HEK293 (cell line): ENCODE measurements at regions of chr17 and their contacts with region 1.

Region 1: GRCh38 chr17:34542700-34543336 is 36.6 kb upstream of the TMEM132E start:
- H3K4me3 ChIP-seq: no peak overlapping the region
- H3K27ac ChIP-seq: no peak overlapping the region
- H3K4me1 ChIP-seq: no peaks in the 10 kb centered on the region
- CTCF ChIP-seq: peak; percentile 40; the same call in 1 of the 2 replicates

Region 2: DNA sequence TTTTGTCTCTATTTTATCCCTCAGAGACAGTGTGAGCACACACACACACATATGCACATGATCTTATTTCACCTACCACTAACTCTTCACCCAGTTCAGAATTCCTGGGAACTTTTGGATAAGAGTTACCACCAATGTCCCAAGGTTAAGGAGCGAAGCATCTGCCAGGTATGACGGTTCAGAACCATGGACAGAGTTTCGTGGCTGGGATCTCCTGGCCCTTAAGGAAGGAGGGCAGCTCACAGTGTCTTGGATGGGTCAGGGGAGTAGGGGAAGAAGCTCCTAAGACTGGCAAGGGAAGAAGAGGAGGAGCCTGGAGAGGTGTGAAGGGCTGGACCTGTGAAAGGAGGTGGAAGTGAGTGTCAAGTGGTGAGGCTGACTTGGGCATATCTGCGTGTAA is 13.6 kb after region 1 on chr17:
- CTCF ChIA-PET with region 1: interaction called, 13 read pairs
- POLR2A ChIA-PET with region 1: no interaction called
- H3K4me3 ChIP-seq: no peak overlapping the region
- H3K27ac ChIP-seq: no peak overlapping the region
- H3K4me1 ChIP-seq: no peaks in the 10 kb centered on the region
- CTCF ChIP-seq: no peak

Region 3: GRCh38 chr17:34584805-34585416 is 42.1 kb after region 1 on chr17:
- CTCF ChIA-PET with region 1: interaction called, 10 read pairs
- POLR2A ChIA-PET with region 1: no interaction called
- H3K4me3 ChIP-seq: no peak overlapping the region
- H3K27ac ChIP-seq: no peak overlapping the region
- H3K4me1 ChIP-seq: peaks cover 7% of the 10 kb centered on the region
- CTCF ChIP-seq: no peak

Region 4: GRCh38 chr17:34647511-34647910 is 104.7 kb after region 1 on chr17:
- CTCF ChIA-PET with region 1: interaction called, 10 read pairs
- POLR2A ChIA-PET with region 1: no interaction called
- H3K4me3 ChIP-seq: no peak overlapping the region
- H3K27ac ChIP-seq: no peak overlapping the region
- H3K4me1 ChIP-seq: peaks cover 22% of the 10 kb centered on the region
- CTCF ChIP-seq: no peak

Region 5: DNA sequence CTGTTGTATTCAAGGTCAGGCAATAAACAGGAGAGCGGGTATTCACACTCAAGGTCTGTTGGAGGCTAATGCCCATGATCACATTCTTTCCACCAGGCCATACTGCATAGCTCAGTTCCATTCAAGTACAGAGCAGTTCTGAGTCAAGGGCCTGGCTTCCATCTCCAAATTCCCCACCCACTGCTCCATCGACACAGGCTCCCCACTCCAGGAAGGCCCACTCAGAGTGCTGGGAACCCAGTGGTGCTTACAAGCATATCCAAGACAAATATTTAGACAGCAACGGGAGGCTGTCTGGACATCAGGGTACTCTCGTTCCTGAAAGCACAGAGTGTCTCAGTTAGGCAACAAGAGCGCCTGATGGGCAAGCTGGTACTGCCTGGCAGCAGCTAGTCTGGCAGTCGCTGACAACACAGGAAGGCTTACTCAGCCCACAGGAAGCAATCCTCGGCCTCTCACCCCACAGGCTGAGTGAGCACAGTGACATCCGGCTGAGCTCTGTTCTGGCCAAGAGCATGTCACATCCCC is 479.8 kb after region 1 on chr17:
- CTCF ChIA-PET with region 1: no interaction called
- POLR2A ChIA-PET with region 1: no interaction called
- H3K4me3 ChIP-seq: no peak overlapping the region
- H3K27ac ChIP-seq: no peak overlapping the region
- H3K4me1 ChIP-seq: no peaks in the 10 kb centered on the region
- CTCF ChIP-seq: no peak